ENCODE measurements at regions of chr2 and their contacts with region 1.

Region 1: GRCh38 chr2:111625766-111626616 is 258.0 kb downstream of the ANAPC1 start:
- DNase-seq: no peak

Region 2: GRCh38 chr2:111652038-111652437 is 26.0 kb after region 1 on chr2:
- intact Hi-C with region 1: loop called in 1 of 2 experiments (anchors 1 kb)
- DNase-seq: no peak

Measured in posterior vena cava (tissue), 2 donors.